Mammary epithelial cell (primary cell): ENCODE measurements at regions of chr16 and their contacts with region 1.

Region 1: DNA sequence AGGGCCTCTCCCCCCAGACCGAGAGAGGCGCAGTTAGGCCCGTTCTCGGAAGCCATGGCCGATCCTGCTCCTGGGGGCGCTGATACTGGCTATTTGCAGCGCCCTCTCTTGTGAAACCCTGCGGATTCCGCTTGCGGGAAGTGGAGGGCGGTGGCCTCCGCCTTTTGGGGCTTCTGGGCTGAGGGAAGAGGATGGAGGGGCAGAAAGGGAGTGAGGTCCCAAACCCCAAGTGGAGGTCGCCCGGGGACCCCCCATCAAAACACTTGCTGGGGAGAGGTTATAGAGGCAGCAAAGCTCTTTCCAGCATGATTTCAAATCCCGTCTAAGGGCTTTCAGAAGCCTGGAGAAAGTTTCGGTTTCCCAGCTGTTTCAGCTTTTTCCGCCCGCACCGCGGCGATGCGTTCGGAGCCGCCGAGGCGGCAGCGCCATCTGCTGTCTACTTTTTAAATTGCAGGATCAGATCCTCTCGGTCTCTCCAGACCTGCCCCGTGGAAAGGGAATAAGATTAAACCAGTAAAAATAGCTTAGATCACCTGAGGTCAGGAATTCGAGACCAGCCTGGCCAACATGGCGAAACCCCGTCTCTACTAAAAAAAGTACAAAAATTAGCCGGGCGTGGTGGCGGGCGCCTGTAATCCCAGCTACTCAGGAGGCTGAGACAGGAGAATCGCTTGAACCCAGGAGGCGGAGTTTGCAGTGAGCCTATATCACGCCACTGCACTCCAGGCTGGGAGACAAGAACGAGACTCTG is 15.8 kb downstream of the SNX20 start:
- DNase-seq: peak; percentile 53
- H3K4me3 ChIP-seq: peak overlapping the region; percentile 22 to 30 (median 23)
- H3K27ac ChIP-seq: no peak overlapping the region
- H3K4me1 ChIP-seq: peaks cover 3% of the 10 kb centered on the region
- H3K27me3 ChIP-seq: no peaks in the 10 kb centered on the region
- CTCF ChIP-seq: peak; percentile 75 to 85

Region 2: DNA sequence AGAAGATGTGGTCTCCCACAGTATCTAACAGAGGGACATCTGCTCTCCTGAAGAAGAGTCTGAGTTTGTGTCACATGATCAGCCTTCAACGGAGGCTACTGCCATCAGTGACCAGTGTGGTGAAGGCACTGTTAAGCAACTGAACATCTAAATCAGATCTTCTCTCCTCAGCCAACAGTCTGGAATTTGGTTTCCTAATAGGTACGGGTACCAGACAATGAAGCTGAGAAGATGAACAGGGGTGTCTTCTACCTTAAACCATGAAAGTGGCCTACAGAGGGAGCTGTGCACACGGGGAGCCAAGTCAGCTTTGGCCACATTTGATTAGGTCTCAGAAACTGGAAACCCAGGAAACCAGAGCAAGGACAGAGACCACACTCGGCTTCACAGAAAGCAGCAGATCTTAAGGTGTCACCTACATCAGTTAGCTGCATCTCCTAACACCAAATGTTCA is 338.3 kb before region 1 on chr16:
- CTCF ChIA-PET with region 1: no interaction called
- dilution Hi-C with region 1: no loop called
- in situ Hi-C with region 1: no loop called
- intact Hi-C with region 1: loop called (anchors 1 kb)
- DNase-seq: peak; percentile 46
- H3K4me3 ChIP-seq: no peak overlapping the region
- H3K27ac ChIP-seq: no peak overlapping the region
- H3K4me1 ChIP-seq: no peaks in the 10 kb centered on the region
- H3K27me3 ChIP-seq: no peaks in the 10 kb centered on the region
- CTCF ChIP-seq: peak; percentile 38 to 59

Region 3: GRCh38 chr16:50373780-50374179 is 291.5 kb before region 1 on chr16:
- CTCF ChIA-PET with region 1: interaction called, 7 read pairs
- dilution Hi-C with region 1: no loop called
- in situ Hi-C with region 1: loop called (anchors 10 to 25 kb)
- intact Hi-C with region 1: loop called (anchors 1 kb)
- DNase-seq: no peak
- H3K4me3 ChIP-seq: no peak overlapping the region
- H3K27ac ChIP-seq: no peak overlapping the region
- H3K4me1 ChIP-seq: peaks cover 9% of the 10 kb centered on the region
- H3K27me3 ChIP-seq: no peaks in the 10 kb centered on the region
- CTCF ChIP-seq: no peak

Region 4: GRCh38 chr16:50697851-50698767 is 32.8 kb after region 1 on chr16:
- CTCF ChIA-PET with region 1: no interaction called
- dilution Hi-C with region 1: no loop called
- in situ Hi-C with region 1: no loop called
- intact Hi-C with region 1: no loop called
- DNase-seq: peak; percentile 86
- H3K4me3 ChIP-seq: peak overlapping the region in 1 of 3 experiments; percentile 16
- H3K27ac ChIP-seq: peak overlapping the region; percentile 81
- H3K4me1 ChIP-seq: peaks cover 42% of the 10 kb centered on the region
- H3K27me3 ChIP-seq: no peaks in the 10 kb centered on the region
- CTCF ChIP-seq: no peak

Region 5: DNA sequence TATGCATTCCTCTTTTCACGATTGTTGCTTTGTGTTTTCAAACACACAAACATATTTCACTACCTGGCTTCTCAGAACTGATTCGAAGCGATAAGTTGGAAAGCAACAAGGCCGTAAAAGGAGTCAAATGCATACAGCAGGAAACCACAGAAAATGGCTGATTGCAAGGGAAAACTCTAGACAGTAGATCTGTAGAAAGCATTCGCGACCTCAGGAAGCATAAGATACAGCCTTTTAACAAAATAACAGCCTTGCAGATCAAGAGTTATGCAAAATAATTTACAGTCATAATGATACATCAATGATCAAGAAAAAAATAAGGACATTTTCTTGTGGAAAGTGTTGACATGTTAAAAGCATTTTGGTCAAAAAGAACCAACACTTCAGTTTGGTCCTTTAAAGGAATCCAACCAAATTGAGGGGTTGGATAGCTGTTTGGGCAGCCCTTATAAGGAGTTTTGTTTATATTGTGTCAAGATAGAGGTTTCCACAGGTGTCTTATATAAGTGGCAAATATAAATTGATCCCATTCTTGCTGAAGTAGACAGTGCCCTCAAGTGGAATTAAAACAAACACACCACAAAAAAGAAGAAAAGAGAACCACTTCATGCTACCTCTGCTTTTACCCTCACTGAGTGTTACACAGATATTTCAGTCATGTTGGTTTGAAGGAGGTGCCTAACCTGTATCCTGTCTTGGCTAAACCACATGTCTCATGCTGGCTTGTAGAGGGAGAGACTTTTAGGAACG is 82.1 kb after region 1 on chr16:
- CTCF ChIA-PET with region 1: interaction called, 3 read pairs
- dilution Hi-C with region 1: no loop called
- in situ Hi-C with region 1: loop called in 1 of 2 experiments (anchors 5 kb)
- intact Hi-C with region 1: no loop called
- DNase-seq: peak; percentile 34
- H3K4me3 ChIP-seq: no peak overlapping the region
- H3K27ac ChIP-seq: no peak overlapping the region
- H3K4me1 ChIP-seq: peaks cover 22% of the 10 kb centered on the region
- H3K27me3 ChIP-seq: no peaks in the 10 kb centered on the region
- CTCF ChIP-seq: peak; percentile 23 to 45

Region 6: GRCh38 chr16:51982715-51983680 is 1317.7 kb after region 1 on chr16:
- CTCF ChIA-PET with region 1: no interaction called
- dilution Hi-C with region 1: no loop called
- in situ Hi-C with region 1: no loop called
- intact Hi-C with region 1: loop called (anchors 10 kb)
- DNase-seq: peak; percentile 42
- H3K4me3 ChIP-seq: no peak overlapping the region
- H3K27ac ChIP-seq: no peak overlapping the region
- H3K4me1 ChIP-seq: no peaks in the 10 kb centered on the region
- H3K27me3 ChIP-seq: peaks cover 4% of the 10 kb centered on the region
- CTCF ChIP-seq: peak; percentile 69 to 79